Activated T-helper 1 cell treated with anti-CD3 and anti-CD28 coated beads, Interleukin-12 subunit alpha, Interleukin-12 subunit beta, Interleukin-2, Interleukin-4 antibody, amounts not matched to agents 30 ng/mL and 10 ng/mL and 1 ng/mL, durations not matched to agents 14 hours and 24 hours and 36 hours (primary cell): ENCODE measurements at regions of chr2 and their contacts with region 1.

Region 1: DNA sequence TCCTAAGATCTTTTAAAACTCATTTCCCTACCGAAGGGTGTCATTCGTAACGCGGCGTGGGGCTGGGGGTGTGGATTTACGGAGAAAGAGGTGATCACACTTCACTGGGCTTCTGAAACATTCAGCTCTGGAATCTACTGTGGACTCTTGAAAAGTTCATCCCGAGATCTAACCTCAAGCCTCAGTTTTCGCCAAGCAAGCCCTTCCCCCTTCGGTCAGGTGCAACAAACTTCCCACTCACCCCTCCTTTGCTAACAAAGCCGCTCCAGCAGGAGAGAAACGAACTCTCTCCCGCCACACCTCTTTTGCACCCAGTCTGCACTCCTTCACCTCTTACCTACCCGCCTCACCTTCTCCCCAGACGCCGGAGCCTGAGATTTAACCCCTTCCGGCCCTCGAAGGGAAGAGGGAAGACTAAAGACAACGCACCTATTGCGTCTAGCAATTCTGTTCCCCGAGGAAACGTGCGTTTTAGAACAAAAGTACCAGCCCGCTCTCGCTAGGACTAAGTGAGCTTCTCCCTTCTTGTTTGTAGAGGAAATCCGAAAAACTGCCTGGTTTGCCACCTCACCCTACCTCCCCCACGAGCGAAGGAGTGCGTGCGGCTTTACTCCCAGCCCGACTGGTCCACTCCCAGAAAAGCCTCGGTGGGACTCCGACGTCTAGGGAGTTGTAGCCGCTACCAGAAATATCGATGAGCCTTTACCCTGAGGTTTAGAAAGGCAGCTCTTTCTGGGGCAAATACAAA is 538 bp upstream of the PEX13 start:
- DNase-seq: peak; percentile 63
- H3K4me3 Mint-ChIP-seq: peak overlapping the region; percentile 97
- H3K27ac Mint-ChIP-seq: peak overlapping the region; percentile 96
- H3K4me1 Mint-ChIP-seq: peaks cover 37% of the 10 kb centered on the region
- H3K27me3 Mint-ChIP-seq: no peaks in the 10 kb centered on the region

Region 2: DNA sequence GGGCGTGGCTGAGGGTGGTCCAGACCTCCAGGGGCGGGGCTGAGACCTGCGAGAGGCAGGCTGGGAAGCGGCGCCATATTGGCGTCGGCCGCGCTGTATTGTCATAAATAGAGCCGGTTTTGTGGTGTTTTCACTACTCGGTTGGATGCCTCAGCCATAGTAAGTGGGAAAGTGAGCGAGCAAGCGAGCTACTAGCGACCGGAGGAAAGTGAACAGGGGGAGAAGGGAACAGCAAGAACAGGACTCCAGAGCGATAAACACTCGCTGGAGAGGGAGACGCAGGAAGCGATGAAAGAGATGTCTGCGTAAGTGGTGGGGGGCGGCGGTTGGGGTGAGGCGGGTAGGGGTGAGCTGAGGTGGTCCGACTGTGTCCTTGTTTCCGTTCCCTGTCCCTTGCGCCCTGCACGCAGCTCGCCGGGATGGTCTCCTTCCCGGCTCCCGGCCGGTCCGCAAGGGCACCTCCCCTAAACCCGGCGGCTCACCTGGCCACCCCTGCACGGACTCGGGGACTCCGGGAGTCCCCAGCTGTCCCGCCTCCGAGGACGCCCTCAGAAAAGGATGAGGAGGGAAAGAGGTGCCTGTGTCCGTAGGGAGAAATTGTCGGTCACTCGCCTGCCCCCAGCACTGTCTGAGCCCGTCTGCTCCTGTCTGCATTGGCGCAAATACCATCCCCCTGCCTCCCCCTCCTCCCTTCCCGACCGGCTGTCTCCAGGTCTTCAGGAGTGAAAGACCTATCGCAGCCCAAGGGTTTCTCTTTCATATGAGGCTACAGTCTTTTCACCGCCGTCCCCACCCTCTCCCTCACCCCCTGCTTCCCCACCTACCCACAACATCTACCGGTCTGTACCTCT is 260.6 kb before region 1 on chr2 and contains the start of gene PAPOLG:
- intact Hi-C with region 1: loop called (anchors 1 kb)
- DNase-seq: peak; percentile 94
- H3K4me3 Mint-ChIP-seq: peak within 1 kb of the TSS; percentile 99
- H3K27ac Mint-ChIP-seq: peak within 1 kb of the TSS; percentile 99
- H3K4me1 Mint-ChIP-seq: peaks cover 31% of the 10 kb centered on the region
- H3K27me3 Mint-ChIP-seq: no peaks in the 10 kb centered on the region
- total RNA-seq, gene PAPOLG: 17.2 and 22.2 TPM in 2 replicates

Region 3: DNA sequence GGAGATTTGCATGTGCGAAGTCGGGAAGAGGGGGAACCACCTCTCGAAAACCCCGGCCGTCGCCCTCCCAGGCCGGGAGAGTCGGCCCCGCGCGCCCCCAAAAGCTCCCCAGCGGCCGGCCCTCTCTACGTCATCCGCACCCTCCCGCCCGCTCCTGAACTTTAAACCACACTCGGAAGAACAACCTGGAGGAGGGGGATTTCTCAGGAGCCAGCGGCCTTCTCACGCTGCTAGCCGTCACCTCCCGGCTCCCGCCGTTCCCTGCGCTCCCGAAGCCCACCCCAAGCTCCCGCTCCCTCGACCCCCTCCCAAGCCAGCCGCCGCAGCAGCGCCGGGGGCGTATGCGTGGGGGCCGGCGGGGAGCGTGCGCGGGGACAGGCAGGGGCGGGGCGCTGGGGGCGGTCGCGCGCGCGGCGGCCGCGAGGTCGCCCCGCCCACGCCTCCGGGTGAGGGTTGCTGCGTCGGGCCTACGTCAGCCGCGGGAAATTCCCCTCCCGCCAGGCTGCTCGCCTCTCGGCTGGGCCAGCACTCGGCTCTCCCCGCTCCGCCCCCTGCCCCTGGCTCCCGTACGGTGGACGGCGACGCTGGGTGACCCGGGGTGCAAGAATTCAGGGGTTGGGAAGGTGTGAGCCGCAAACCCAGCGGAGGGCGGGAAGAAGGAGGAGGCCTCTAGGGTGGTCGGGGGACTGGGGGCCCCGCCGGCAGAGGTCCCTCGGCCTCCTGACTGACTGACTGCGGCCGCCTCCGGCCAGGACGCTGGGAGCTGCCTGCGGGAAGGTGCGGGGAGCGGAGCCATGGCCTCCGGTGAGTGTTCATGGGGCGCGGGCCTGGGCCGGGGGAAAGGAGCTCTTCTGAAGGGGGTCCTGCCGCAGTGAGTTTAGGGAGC is 135.7 kb before region 1 on chr2 and contains the start of gene REL:
- intact Hi-C with region 1: loop called (anchors 1 kb)
- DNase-seq: peak; percentile 89
- H3K4me3 Mint-ChIP-seq: peak within 1 kb of the TSS; percentile 99
- H3K27ac Mint-ChIP-seq: peak within 1 kb of the TSS; percentile 99
- H3K4me1 Mint-ChIP-seq: peaks cover 45% of the 10 kb centered on the region
- H3K27me3 Mint-ChIP-seq: no peaks in the 10 kb centered on the region
- total RNA-seq, gene REL: 93.6 and 97.2 TPM in 2 replicates

Region 4: DNA sequence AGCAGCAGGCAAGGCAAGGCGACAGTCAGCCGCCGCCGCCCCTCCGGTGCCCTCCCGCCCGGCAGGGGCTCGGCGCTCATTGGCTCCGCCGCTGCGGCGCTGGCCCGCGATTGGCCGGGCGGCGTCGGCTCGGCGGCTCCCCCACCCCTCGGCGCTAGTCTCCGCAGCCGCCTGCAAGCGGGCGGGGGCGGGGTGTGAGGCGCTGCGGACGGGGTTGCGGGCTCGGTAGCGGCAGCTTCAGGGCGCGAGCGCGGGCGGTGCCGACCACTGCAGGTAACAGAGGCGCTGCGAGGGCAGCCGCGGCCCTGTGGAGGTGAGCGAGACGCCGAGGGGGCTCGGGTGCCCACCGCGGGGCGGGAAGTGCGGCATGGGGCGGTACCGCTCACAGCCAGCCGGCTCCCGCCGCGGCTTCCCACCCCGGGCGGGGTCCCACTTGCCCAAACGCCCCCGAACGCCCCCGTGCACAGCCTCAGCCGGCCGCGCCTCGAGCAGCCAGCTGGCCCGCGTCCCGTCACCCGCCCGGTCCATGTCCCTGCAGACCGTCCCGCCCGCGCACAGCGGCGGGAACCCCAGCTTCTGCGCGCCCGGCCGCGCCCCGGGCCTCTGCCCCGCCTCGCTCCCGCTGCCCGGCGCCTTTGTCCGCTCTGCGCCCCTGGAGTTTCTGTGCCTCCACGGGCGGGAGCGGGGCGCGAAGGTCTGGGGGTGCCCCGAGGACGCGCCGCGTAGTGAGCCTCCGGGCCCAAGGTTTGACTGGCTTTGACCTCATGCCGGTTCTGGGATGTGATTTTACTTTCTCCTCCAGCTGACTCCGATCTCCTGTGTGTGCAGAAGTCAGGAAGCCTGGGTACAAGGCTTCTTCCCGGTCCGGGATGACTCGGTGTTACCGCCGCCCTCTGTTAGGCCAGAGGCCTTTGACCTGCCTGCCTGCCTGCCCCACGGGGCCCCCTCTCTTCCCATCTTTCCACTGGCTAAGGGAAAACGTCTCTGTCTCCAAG is 49.0 kb after region 1 on chr2 and contains the start of gene SANBR:
- intact Hi-C with region 1: loop called (anchors 1 kb)
- DNase-seq: peak; percentile 85
- H3K4me3 Mint-ChIP-seq: peak within 1 kb of the TSS; percentile 92
- H3K27ac Mint-ChIP-seq: peak within 1 kb of the TSS; percentile 87
- H3K4me1 Mint-ChIP-seq: peaks cover 16% of the 10 kb centered on the region
- H3K27me3 Mint-ChIP-seq: peaks cover 5% of the 10 kb centered on the region
- total RNA-seq, gene SANBR: 2.0 and 2.2 TPM in 2 replicates

Region 5: GRCh38 chr2:61470965-61471904 is 454.3 kb after region 1 on chr2 and contains the start of gene USP34:
- intact Hi-C with region 1: loop called (anchors 1 kb)
- DNase-seq: peak; percentile 88
- H3K4me3 Mint-ChIP-seq: peak within 1 kb of the TSS; percentile 95
- H3K27ac Mint-ChIP-seq: peak within 1 kb of the TSS; percentile 94
- H3K4me1 Mint-ChIP-seq: peaks cover 28% of the 10 kb centered on the region
- H3K27me3 Mint-ChIP-seq: no peaks in the 10 kb centered on the region
- total RNA-seq, gene USP34: 91.3 and 98.1 TPM in 2 replicates

Region 6: GRCh38 chr2:61854474-61855182 is 837.6 kb after region 1 on chr2:
- intact Hi-C with region 1: loop called (anchors 5 kb)
- DNase-seq: peak; percentile 87
- H3K4me3 Mint-ChIP-seq: peak overlapping the region; percentile 98
- H3K27ac Mint-ChIP-seq: peak overlapping the region; percentile 88
- H3K4me1 Mint-ChIP-seq: peaks cover 23% of the 10 kb centered on the region
- H3K27me3 Mint-ChIP-seq: no peaks in the 10 kb centered on the region